Heart right ventricle (tissue), 16 donors: ENCODE measurements at regions of chr1 and their contacts with region 1.

Region 1: GRCh38 chr1:208324005-208324404 is 79.8 kb upstream of the PLXNA2 start:
- DNase-seq: no peak
- ATAC-seq: no peak
- H3K4me3 ChIP-seq: no peak overlapping the region
- H3K27ac ChIP-seq: no peak overlapping the region
- H3K4me1 ChIP-seq: no peaks in the 10 kb centered on the region
- H3K27me3 ChIP-seq: peaks cover 0 to 8% (median 3%) of the 10 kb centered on the region in 7 donors
- CTCF ChIP-seq: no peak

Region 2: GRCh38 chr1:209717818-209718217 is 1393.8 kb after region 1 on chr1:
- intact Hi-C with region 1: loop called in 1 of 10 experiments (anchors 5 kb)
- DNase-seq: no peak
- ATAC-seq: peak in 3 of 8 donors; percentile 34 to 58 (median 55)
- H3K4me3 ChIP-seq: no peak overlapping the region
- H3K27ac ChIP-seq: peak overlapping the region in 6 of 10 donors; percentile 10 to 81 (median 70)
- H3K4me1 ChIP-seq: peaks cover 0 to 23% (median 3%) of the 10 kb centered on the region in 9 donors
- H3K27me3 ChIP-seq: no peaks in the 10 kb centered on the region
- CTCF ChIP-seq: no peak